MCF 10A (cell line): ENCODE measurements at regions of chr1 and their contacts with region 1.

Region 1: DNA sequence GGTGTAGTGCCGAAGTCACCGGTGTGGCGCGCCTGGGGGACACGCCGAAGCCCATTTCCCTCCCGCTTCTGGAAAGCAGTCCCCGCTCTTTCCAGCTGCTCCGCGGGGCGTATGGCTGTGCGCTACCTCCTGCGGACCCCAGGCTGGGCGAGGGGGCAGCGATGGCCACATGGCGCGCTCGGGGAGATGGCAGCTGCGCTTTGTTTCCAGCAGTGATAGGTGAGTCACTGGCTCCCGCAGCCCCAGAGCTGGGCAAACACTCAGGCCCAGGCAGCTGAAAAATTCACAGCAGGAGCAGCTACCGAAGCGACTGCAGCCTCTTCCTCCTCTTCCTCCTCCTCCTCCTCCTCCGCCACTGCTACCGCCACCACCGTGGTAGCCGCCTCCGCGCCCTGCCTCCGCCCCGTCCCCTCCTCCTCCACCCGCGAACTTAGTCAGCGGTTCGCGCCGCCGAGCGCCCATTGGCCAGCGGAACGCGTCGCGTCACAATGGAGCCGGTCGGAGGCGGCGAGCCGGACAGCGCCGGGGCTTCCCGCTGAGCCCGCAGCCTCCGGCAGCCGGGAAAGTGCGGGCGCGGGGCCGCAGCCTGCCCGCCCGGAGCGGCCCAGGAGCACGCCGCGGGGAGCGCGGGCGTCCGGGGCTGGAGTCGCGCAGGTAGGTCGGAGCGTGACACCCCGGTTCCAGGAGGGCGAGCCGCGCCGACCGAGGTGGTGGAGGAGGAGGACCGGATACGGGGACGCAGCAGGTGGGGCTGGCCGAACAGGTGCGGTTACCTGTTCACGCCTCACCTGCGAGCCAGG is at the start of gene LRRC8B:
- DNase-seq: peak; percentile 87
- H3K4me3 Mint-ChIP-seq: peak within 1 kb of the TSS; percentile 77
- H3K27ac Mint-ChIP-seq: peak within 1 kb of the TSS; percentile 20
- H3K4me1 Mint-ChIP-seq: peaks cover 7% of the 10 kb centered on the region
- H3K27me3 Mint-ChIP-seq: no peaks in the 10 kb centered on the region
- CTCF ChIP-seq: no peak
- total RNA-seq, gene LRRC8B: 7.0 and 9.7 TPM in 2 replicates

Region 2: DNA sequence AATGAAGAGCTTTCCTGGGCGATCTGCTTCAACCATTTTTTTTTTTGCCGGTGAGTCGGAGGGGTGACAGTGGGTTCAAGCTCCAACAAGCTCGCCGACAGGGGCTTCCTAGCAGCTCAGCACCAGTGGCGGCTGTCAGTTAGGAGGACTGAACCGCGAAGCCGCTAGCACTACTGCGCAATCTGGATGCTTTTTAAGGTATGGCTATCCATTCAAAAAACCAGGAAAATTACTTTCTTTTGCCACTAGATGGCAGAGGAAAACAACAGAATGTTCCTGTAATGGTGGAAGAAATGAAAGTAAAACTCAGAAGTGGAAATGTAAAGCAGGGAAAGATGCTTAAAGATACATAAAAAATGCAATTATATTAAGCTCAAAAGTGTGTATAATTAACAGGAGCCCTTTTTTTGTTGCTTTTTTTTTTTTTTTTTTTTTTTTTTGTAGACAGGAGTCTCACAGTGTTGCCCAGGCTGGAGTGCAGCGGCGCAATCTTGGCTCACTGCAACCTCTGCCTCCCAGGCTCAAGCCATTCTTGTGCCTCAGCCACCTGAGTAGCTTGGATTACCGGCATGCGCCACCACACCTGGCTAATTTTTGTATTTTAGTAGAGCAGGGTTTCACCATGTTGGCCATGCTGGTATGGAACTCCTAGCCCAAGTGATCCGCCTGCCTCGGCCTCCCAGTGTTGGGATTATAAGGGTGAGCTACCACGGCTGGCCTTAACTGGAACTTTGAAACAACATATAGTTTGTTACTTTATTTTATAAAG is 540.6 kb before region 1 on chr1:
- CTCF ChIA-PET with region 1: no interaction called
- POLR2A ChIA-PET with region 1: no interaction called
- intact Hi-C with region 1: no loop called
- DNase-seq: peak; percentile 73
- H3K4me3 Mint-ChIP-seq: peak overlapping the region; percentile 59
- H3K27ac Mint-ChIP-seq: peak overlapping the region; percentile 87
- H3K4me1 Mint-ChIP-seq: peaks cover 37% of the 10 kb centered on the region
- H3K27me3 Mint-ChIP-seq: no peaks in the 10 kb centered on the region
- CTCF ChIP-seq: peak; percentile 53

Region 3: DNA sequence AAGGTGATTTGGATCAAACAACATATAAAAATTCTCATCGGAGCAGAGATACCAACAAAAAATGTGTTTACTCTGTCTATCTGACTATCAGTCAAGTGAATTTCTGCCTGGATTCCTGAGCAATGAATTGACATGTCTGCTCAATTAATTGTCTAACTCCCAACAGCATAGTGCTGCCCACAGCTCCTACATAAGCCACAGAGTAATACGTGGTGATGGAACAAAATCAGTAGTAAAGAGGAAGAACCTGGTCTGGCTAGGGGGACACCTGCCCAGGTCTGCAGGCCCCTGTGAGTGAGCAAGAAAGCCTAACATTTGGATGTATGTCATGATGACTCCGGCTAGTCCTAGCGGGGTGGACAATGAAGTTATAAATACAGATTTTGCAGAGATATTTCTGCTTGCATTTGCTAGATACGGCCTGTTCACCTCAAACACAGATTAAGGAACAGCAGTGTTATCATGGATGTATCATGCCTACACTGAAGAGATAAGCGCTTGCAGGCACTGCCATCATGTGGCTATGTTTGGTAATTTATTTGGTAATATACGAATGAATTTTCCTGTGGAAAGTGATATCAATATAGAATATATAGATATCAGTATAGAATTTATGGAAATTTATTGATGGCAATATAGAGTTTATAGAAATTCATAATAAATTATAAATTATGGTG is 69.6 kb before region 1 on chr1:
- CTCF ChIA-PET with region 1: no interaction called
- POLR2A ChIA-PET with region 1: no interaction called
- intact Hi-C with region 1: no loop called
- DNase-seq: peak; percentile 61
- H3K4me3 Mint-ChIP-seq: no peak overlapping the region
- H3K27ac Mint-ChIP-seq: no peak overlapping the region
- H3K4me1 Mint-ChIP-seq: peaks cover 5% of the 10 kb centered on the region
- H3K27me3 Mint-ChIP-seq: no peaks in the 10 kb centered on the region
- CTCF ChIP-seq: peak; percentile 44

Region 4: DNA sequence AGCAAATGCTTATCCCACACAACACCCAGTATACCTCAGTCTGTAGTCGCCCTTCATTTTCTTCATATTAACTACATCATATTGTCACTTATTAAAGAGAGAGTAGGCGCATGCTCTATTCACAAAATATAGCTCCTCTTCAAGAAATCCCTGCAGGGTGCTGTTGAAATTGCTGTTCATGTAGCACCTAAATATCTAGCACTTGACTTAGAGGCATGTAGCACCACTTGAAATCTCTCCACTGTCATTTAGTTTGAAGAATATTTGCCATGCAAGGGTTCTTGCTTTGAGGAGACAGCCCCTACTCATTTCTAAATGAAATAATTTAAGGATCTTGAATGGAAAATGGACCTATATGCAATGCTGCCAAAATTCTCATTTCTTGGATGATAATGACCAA is 20.9 kb before region 1 on chr1:
- CTCF ChIA-PET with region 1: no interaction called
- POLR2A ChIA-PET with region 1: no interaction called
- intact Hi-C with region 1: no loop called
- DNase-seq: no peak
- H3K4me3 Mint-ChIP-seq: no peak overlapping the region
- H3K27ac Mint-ChIP-seq: no peak overlapping the region
- H3K4me1 Mint-ChIP-seq: peaks cover 12% of the 10 kb centered on the region
- H3K27me3 Mint-ChIP-seq: peaks cover 18% of the 10 kb centered on the region
- CTCF ChIP-seq: no peak

Region 5: DNA sequence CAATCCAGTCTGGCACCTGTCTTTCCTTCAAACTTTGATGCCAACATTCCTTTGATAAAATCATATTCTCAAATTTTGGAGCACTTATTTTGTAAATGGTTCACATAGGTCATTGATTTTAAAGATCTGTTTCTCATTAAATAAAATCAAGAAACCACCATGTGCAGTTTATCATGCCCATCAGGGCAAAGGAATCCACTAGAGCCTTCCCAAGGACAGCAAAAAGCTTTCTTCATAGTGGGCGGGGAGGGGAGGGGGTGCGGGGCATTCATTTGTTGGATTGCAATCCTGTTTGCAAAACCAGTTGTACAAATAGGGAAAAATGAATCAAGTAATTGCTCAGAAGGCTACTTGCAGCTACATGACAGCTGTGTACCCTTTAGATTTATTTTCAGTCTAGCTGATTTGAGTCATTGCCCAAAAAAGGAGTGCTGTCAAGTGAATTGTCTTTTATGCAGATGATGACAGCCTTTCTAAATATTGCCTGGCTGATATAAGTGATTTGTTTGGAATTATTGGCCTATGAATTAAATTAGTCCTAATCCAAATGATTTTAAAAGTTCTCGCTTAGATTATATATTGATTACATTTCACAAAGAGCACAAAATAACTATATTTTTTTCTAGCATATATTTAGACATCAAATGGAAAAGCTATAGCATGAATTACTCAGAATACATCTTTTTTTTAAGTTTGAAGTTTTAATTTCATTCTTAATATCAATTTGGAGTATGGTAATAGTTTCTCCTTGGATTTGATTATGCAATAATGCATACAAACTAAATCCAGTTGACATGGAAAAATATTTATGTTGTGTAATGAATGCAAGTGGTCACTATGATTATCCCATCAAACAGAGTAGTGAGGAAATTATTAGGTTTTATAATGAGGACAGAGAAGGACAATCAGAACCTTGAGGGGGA is 23.3 kb after region 1 on chr1:
- CTCF ChIA-PET with region 1: interaction called, 5 read pairs
- POLR2A ChIA-PET with region 1: interaction called, 8 read pairs
- intact Hi-C with region 1: loop called (anchors 2 kb)
- DNase-seq: peak; percentile 88
- H3K4me3 Mint-ChIP-seq: no peak overlapping the region
- H3K27ac Mint-ChIP-seq: peak overlapping the region; percentile 19
- H3K4me1 Mint-ChIP-seq: peaks cover 40% of the 10 kb centered on the region
- H3K27me3 Mint-ChIP-seq: no peaks in the 10 kb centered on the region
- CTCF ChIP-seq: no peak

Region 6: GRCh38 chr1:89598450-89599331 is 74.1 kb after region 1 on chr1:
- CTCF ChIA-PET with region 1: interaction called, 58 read pairs
- POLR2A ChIA-PET with region 1: interaction called, 4 read pairs
- intact Hi-C with region 1: loop called (anchors 1 kb)
- DNase-seq: peak; percentile 61
- H3K4me3 Mint-ChIP-seq: no peak overlapping the region
- H3K27ac Mint-ChIP-seq: no peak overlapping the region
- H3K4me1 Mint-ChIP-seq: peaks cover 21% of the 10 kb centered on the region
- H3K27me3 Mint-ChIP-seq: no peaks in the 10 kb centered on the region
- CTCF ChIP-seq: peak; percentile 53

Region 7: GRCh38 chr1:89605692-89606091 is 81.1 kb after region 1 on chr1:
- CTCF ChIA-PET with region 1: interaction called, 58 read pairs
- POLR2A ChIA-PET with region 1: interaction called, 4 read pairs
- intact Hi-C with region 1: no loop called
- DNase-seq: peak; percentile 92
- H3K4me3 Mint-ChIP-seq: peak overlapping the region; percentile 32
- H3K27ac Mint-ChIP-seq: no peak overlapping the region
- H3K4me1 Mint-ChIP-seq: peaks cover 35% of the 10 kb centered on the region
- H3K27me3 Mint-ChIP-seq: no peaks in the 10 kb centered on the region
- CTCF ChIP-seq: no peak

Region 8: GRCh38 chr1:89706700-89707012 is 182.1 kb after region 1 on chr1:
- CTCF ChIA-PET with region 1: no interaction called
- POLR2A ChIA-PET with region 1: no interaction called
- intact Hi-C with region 1: no loop called
- DNase-seq: no peak
- H3K4me3 Mint-ChIP-seq: no peak overlapping the region
- H3K27ac Mint-ChIP-seq: no peak overlapping the region
- H3K4me1 Mint-ChIP-seq: no peaks in the 10 kb centered on the region
- H3K27me3 Mint-ChIP-seq: no peaks in the 10 kb centered on the region
- CTCF ChIP-seq: no peak